Activated CD4-positive, alpha-beta T cell treated with anti-CD3 and anti-CD28 coated beads for 36 hours (primary cell): ENCODE measurements at regions of chr1 and their contacts with region 1.

Region 1: GRCh38 chr1:26500488-26501175 is 28.4 kb downstream of the HMGN2 start:
- DNase-seq: peak; percentile 95
- ATAC-seq: peak; percentile 77
- H3K4me3 Mint-ChIP-seq: peak overlapping the region; percentile 88
- H3K27ac Mint-ChIP-seq: peak overlapping the region; percentile 94
- H3K4me1 Mint-ChIP-seq: peaks cover 16% of the 10 kb centered on the region
- H3K27me3 Mint-ChIP-seq: no peaks in the 10 kb centered on the region

Region 2: DNA sequence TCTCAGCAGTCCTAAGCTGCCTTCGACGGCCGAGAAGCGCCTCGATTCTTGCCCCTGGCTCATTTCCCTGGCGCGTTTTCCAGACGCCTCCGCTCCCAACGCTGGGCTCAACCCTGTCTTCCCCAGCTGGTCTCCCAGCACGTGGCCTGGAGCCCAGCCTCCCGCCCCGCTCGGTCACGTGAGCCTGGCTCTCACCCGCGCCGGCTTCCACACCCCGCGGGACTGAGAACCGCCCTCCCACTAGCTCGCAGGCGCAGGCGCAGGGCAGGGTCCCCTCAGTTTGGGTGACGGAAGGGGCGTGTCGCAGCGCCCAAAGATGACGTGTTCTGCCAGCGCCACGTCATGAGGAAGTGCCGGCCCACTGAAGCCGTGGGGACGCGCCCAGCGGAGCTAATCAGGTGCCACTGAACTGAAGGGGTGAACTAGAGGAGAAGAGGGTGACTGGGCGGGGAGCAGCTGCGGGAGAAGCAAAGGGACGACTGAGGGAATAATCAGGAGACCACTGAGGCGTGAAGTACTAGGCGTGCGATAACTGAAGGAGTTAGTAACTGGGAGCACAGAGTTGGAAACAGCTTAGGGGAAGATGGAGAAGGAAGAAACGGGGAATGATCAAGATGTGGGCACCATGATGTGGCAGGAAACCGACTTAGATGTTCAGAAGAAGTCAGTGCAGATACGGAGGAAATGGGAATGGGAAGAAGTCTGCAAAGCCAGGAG is 68.5 kb before region 1 on chr1 and contains the start of gene DHDDS:
- CTCF ChIA-PET with region 1: no interaction called
- POLR2A ChIA-PET with region 1: interaction called, 3 read pairs
- intact Hi-C with region 1: loop called (anchors 1 kb)
- DNase-seq: peak; percentile 99
- ATAC-seq: peak; percentile 98
- H3K4me3 Mint-ChIP-seq: peak within 1 kb of the TSS; percentile 92
- H3K27ac Mint-ChIP-seq: peak within 1 kb of the TSS; percentile 92
- H3K4me1 Mint-ChIP-seq: peaks cover 17% of the 10 kb centered on the region
- H3K27me3 Mint-ChIP-seq: no peaks in the 10 kb centered on the region
- total RNA-seq, gene DHDDS: 34.1 to 40.7 TPM

Region 3: GRCh38 chr1:26529655-26530409 is 29.2 kb after region 1 on chr1 and contains the start of gene RPS6KA1:
- CTCF ChIA-PET with region 1: interaction called, 6 read pairs
- POLR2A ChIA-PET with region 1: interaction called, 5 read pairs
- intact Hi-C with region 1: loop called in 1 of 2 experiments (anchors 1 kb)
- DNase-seq: peak; percentile 78
- ATAC-seq: peak; percentile 88
- H3K4me3 Mint-ChIP-seq: peak within 1 kb of the TSS; percentile 81
- H3K27ac Mint-ChIP-seq: peak within 1 kb of the TSS; percentile 87
- H3K4me1 Mint-ChIP-seq: peaks cover 21% of the 10 kb centered on the region
- H3K27me3 Mint-ChIP-seq: no peaks in the 10 kb centered on the region
- total RNA-seq, gene RPS6KA1: 116 to 160 TPM

Region 4: GRCh38 chr1:26695356-26696118 is 194.9 kb after region 1 on chr1 and contains the start of gene ARID1A:
- CTCF ChIA-PET with region 1: interaction called, 8 read pairs
- POLR2A ChIA-PET with region 1: interaction called, 7 read pairs
- intact Hi-C with region 1: loop called in 1 of 2 experiments (anchors 2 kb)
- DNase-seq: peak; percentile 97
- ATAC-seq: peak; percentile 55
- H3K4me3 Mint-ChIP-seq: peak within 1 kb of the TSS; percentile 81
- H3K27ac Mint-ChIP-seq: peak within 1 kb of the TSS; percentile 91
- H3K4me1 Mint-ChIP-seq: peaks cover 30% of the 10 kb centered on the region
- H3K27me3 Mint-ChIP-seq: no peaks in the 10 kb centered on the region
- total RNA-seq, gene ARID1A: 73.1 to 112 TPM

Region 5: DNA sequence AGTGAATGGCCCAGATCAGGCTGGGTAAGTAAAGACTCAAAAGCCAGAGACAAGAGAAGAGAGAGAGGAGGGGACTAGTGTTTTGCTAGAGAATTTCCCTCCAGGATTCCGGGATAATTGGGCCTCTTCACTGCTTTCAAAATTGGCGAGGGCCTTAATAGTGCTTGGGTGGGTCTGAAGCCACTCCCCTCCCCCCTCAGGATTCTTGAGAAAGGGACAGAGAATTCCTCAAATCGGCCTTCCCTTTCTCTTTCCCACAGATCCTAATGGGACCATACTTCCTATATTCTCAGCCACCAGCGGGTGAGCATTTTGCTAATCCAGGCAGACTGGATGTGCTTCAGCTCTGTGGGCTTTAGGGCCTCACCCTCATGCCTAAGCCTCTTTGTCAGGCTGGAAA is 374.3 kb after region 1 on chr1:
- CTCF ChIA-PET with region 1: no interaction called
- POLR2A ChIA-PET with region 1: no interaction called
- intact Hi-C with region 1: loop called in 1 of 2 experiments (anchors 10 kb)
- DNase-seq: no peak
- ATAC-seq: no peak
- H3K4me3 Mint-ChIP-seq: no peak overlapping the region
- H3K27ac Mint-ChIP-seq: no peak overlapping the region
- H3K4me1 Mint-ChIP-seq: peaks cover 2% of the 10 kb centered on the region
- H3K27me3 Mint-ChIP-seq: no peaks in the 10 kb centered on the region

Region 6: GRCh38 chr1:27234049-27234882 is 733.6 kb after region 1 on chr1 and contains the start of gene WDTC1:
- CTCF ChIA-PET with region 1: no interaction called
- POLR2A ChIA-PET with region 1: no interaction called
- intact Hi-C with region 1: loop called in 1 of 2 experiments (anchors 2 kb)
- DNase-seq: peak; percentile 99
- ATAC-seq: peak; percentile 95
- H3K4me3 Mint-ChIP-seq: peak within 1 kb of the TSS; percentile 95
- H3K27ac Mint-ChIP-seq: peak within 1 kb of the TSS; percentile 93
- H3K4me1 Mint-ChIP-seq: peaks cover 27% of the 10 kb centered on the region
- H3K27me3 Mint-ChIP-seq: no peaks in the 10 kb centered on the region
- total RNA-seq, gene WDTC1: 19.3 to 21.9 TPM